ENCODE measurements at regions of chr3 and their contacts with region 1.

Region 1: DNA sequence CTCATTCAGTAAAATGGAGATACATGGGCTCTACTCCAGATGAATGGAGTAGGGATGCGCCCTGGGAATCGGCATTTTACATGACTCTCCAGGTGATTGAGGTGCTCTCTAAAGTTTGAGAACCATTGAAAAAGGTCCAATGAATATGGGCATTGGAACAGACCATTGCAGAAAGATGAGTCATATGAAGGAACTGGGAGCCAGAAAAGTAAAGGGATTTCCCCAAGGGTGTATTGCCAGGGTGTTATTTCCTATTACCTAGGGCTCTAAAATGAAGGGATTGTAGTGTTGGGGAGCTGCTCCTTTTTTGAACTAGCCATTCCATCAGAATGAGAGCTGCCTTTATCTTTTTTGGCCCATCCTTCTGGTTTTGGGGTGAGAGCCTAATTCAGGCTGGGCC is 21.7 kb downstream of the CLDN11 start:
- DNase-seq: no peak
- ATAC-seq: no peak
- H3K4me3 Mint-ChIP-seq: no peak overlapping the region
- H3K27ac Mint-ChIP-seq: no peak overlapping the region
- H3K4me1 Mint-ChIP-seq: peaks cover 14% of the 10 kb centered on the region
- H3K27me3 Mint-ChIP-seq: peaks cover 12% of the 10 kb centered on the region
- CTCF ChIP-seq: no peak

Region 2: DNA sequence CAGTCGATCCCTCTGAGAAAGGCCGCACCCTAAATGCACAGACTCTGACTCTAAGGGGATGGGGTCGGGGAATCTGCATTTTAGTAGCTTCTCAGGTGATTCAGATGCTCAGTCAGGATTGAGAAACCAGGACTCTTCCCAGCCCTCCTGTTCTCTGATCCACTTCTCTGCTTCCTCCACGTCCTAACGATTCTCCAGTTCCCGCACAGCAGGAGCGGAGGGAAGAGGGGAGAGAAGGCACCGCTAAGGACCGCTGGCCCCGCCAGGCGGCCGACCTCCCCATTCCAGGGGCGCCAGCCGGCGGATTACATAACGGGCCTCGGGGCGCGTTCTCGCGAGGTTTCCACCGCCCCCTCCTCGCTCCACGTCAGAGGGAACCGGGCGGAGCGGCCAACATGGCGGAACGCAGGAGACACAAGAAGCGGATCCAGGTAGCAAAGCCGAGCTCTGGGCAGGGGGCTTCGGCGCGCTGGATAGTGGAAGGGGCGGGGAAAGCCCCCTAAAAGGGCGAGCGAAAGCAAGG is 473.9 kb before region 1 on chr3 and contains the start of gene SEC62:
- CTCF ChIA-PET with region 1: no interaction called
- POLR2A ChIA-PET with region 1: no interaction called
- intact Hi-C with region 1: no loop called
- DNase-seq: peak; percentile 95
- ATAC-seq: peak; percentile 84
- H3K4me3 Mint-ChIP-seq: peak within 1 kb of the TSS; percentile 85
- H3K27ac Mint-ChIP-seq: peak within 1 kb of the TSS; percentile 97
- H3K4me1 Mint-ChIP-seq: peaks cover 57% of the 10 kb centered on the region
- H3K27me3 Mint-ChIP-seq: no peaks in the 10 kb centered on the region
- CTCF ChIP-seq: no peak
- total RNA-seq, gene SEC62: 52.5 to 60.2 TPM

Region 3: DNA sequence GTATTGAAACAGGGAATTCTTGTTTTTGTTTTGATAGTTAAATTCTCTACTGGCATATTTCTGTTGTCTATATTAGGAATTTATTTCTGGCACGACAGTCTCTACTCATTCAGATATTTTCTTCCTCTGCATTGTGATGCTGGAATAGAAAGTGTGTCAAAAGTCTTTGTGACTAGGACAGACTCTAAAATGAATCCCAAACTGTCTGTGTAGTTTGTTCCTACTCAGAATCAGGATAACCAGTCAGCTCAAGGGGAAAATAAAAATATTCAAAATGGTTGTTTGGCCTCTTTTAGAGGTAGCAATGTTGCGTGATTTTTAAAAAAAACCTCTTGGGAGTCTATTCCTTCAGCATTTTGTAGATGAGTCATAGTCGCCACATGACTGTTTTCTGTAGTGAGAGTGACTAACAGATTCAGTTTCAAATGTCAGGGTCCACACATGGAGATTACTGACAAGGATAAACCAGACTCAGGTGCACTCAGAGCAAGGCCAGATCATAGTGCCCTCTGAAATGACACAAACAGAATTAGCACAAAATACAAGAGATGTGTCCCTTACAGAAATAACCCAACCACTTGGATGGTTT is 132.4 kb after region 1 on chr3:
- CTCF ChIA-PET with region 1: no interaction called
- POLR2A ChIA-PET with region 1: no interaction called
- intact Hi-C with region 1: loop called (anchors 10 kb)
- DNase-seq: peak; percentile 53
- ATAC-seq: peak; percentile 99
- H3K4me3 Mint-ChIP-seq: no peak overlapping the region
- H3K27ac Mint-ChIP-seq: no peak overlapping the region
- H3K4me1 Mint-ChIP-seq: peaks cover 22% of the 10 kb centered on the region
- H3K27me3 Mint-ChIP-seq: peaks cover 28% of the 10 kb centered on the region
- CTCF ChIP-seq: no peak

Measured in activated CD8-positive, alpha-beta T cell treated with anti-CD3 and anti-CD28 coated beads for 36 hours (primary cell).